Heart right ventricle (tissue), 16 donors: ENCODE measurements at regions of chr1 and their contacts with region 1.

Region 1: DNA sequence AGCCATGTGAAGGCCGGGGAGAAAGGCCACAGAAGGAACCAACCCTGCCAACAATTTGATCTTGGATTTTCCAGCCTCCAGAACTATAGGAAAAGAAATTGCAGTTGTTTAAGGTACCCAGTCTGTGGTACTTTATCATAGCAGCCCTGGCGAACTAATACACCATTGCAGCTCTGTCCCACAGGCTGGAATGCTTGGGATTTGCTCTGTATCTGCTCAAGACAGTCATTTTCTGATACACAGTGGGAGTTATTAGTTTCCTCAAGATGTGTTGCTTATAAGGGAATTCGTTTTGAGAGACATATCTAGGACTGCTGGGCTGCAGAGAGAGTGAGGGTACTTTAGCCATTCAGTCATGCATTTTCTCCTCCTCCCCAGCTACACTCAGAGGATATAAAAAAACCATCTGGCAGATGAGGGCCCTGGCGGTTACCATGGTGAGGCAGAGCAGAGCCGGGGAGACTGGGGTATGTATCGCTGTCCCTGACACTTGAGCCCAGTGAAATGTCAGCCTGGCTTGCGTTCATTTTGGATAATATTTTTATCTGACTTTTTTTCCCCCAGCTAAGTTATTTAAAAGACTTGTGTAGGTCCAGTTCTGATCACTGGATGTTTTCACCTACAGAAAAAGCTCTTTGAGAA is 104.6 kb downstream of the DIRAS3 start:
- DNase-seq: peak; percentile 29 to 45
- ATAC-seq: peak; percentile 72 to 94 (median 90)
- H3K4me3 ChIP-seq: no peak overlapping the region
- H3K27ac ChIP-seq: peak overlapping the region in 7 of 10 donors; percentile 41 to 79 (median 61)
- H3K4me1 ChIP-seq: peaks cover 2 to 30% (median 22%) of the 10 kb centered on the region in 9 donors
- H3K27me3 ChIP-seq: no peaks in the 10 kb centered on the region
- CTCF ChIP-seq: no peak

Region 2: DNA sequence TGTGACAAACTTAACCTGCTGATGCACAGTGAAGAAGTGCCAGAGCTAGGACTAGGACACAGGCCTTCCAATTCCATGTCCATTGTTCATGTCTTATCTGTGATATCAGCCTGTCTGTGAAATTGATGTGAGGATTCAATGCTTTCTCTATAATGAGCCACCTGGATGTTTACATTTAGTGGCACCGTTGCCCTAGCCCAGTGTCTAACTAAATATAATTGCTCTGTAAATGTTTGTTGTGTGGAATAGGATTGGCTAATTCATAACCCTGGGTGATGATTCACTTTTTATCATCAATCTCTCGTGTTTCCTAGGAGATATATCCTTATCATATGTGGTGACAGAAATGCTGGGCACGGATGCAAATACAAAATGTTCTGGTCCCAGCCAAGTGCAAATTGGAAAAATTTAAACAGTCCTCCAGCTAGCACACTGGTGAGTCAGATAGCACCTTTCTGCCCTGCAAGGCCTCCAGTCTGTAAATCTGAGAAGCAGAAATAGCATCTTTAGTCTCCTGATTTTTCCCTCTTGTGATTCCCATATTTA is 65.7 kb before region 1 on chr1:
- intact Hi-C with region 1: loop called in 1 of 10 experiments (anchors 2 kb)
- DNase-seq: no peak
- ATAC-seq: peak in 5 of 8 donors; percentile 31 to 92 (median 90)
- H3K4me3 ChIP-seq: no peak overlapping the region
- H3K27ac ChIP-seq: no peak overlapping the region
- H3K4me1 ChIP-seq: peaks cover 0 to 18% (median 0%) of the 10 kb centered on the region in 9 donors
- H3K27me3 ChIP-seq: no peaks in the 10 kb centered on the region
- CTCF ChIP-seq: no peak

Region 3: DNA sequence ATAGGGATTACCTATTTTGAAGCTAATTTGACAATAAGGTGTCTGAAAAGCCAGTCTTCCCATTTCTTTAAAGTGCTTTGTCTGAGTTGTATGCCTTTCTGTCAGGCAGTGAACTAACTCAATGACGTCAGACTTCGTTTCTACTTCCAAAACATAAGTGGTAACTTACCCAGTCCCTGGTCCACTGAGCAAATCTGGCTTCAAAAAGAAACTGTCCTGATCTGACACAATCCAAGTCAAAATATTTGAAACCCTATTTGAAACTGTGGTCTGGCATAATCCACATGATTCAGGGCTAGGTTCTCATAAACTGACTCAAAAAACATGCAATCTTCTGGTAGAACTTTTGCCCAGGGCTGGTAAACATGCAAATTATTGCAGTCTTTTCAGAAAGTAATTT is 70.5 kb after region 1 on chr1:
- intact Hi-C with region 1: loop called in 1 of 10 experiments (anchors 5 kb)
- DNase-seq: no peak
- ATAC-seq: peak in 1 of 8 donors; percentile 59
- H3K4me3 ChIP-seq: no peak overlapping the region
- H3K27ac ChIP-seq: no peak overlapping the region
- H3K4me1 ChIP-seq: no peaks in the 10 kb centered on the region
- H3K27me3 ChIP-seq: no peaks in the 10 kb centered on the region
- CTCF ChIP-seq: no peak